ENCODE measurements at regions of chr11 and their contacts with region 1.

Region 1: GRCh38 chr11:87097582-87097981 is 59.8 kb downstream of the TMEM135 start:
- DNase-seq: peak; percentile 22
- H3K4me3 ChIP-seq: no peak overlapping the region
- H3K27ac ChIP-seq: no peak overlapping the region
- H3K4me1 ChIP-seq: no peaks in the 10 kb centered on the region
- H3K27me3 ChIP-seq: no peaks in the 10 kb centered on the region
- CTCF ChIP-seq: peak; percentile 80 to 81

Region 2: DNA sequence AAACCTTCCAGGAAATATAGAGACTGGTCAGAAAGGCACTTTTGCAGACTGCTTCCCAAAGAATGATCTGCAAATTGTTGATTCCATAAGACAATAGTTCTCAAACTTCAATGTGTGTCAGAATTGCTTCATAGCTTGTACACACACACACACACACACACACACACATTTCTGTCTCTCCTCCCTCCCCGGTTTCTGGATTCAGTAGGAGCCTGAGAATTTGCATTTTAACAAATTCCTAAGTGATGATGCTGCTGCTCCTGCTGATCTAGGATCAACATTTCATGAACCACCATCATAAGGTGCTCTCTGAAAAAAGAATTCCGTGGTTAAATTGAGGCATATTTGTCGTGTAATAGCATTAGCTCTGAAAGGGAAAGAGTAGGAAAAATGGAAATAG is 107.1 kb before region 1 on chr11:
- CTCF ChIA-PET with region 1: no interaction called
- dilution Hi-C with region 1: no loop called
- in situ Hi-C with region 1: no loop called
- intact Hi-C with region 1: loop called (anchors 10 kb)
- DNase-seq: peak; percentile 83
- H3K4me3 ChIP-seq: no peak overlapping the region
- H3K27ac ChIP-seq: no peak overlapping the region
- H3K4me1 ChIP-seq: peaks cover 10% of the 10 kb centered on the region
- H3K27me3 ChIP-seq: no peaks in the 10 kb centered on the region
- CTCF ChIP-seq: no peak

Measured in mammary epithelial cell (primary cell).